PC-3 (cell line): ENCODE measurements at regions of chr10 and their contacts with region 1.

Region 1: GRCh38 chr10:73940634-73941221 is 29.8 kb downstream of the PLAU start:
- DNase-seq: peak; percentile 100
- ATAC-seq: peak; percentile 85
- H3K4me3 ChIP-seq: peak overlapping the region; percentile 38
- H3K27ac ChIP-seq: peak overlapping the region; percentile 74
- H3K4me1 ChIP-seq: peaks cover 31% of the 10 kb centered on the region
- H3K27me3 ChIP-seq: no peaks in the 10 kb centered on the region
- CTCF ChIP-seq: peak; percentile 100

Region 2: DNA sequence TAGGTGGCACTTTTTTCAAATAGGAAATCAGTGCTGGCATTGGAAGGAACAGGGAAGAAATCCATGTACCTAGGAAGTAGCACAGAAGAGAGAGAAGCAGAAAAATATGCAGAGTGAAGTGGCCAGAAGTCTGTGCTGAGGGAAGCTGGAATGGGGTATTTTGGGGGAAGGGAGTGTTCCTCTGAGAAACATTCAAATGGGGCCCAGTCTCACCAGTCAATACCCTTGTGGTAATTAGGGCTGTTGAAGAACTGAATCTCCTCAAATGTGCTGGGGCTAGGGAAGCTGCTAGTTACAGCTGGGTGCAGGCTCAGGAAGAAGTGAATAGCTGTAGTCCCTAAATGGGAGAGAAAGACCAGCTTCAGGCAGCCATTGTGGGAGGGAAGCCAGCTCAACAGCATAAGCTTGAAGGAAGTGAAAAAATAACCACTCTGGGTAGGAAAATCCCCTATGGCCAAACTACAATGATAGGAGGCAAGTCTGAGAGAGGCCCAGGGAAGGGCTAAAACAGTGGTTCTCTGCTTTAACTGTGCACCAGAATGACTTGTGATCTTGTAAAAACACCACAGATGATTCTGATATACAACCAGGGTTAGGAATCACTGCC is 136.9 kb before region 1 on chr10:
- CTCF ChIA-PET with region 1: no interaction called
- POLR2A ChIA-PET with region 1: no interaction called
- intact Hi-C with region 1: no loop called
- DNase-seq: no peak
- ATAC-seq: no peak
- H3K4me3 ChIP-seq: no peak overlapping the region
- H3K27ac ChIP-seq: no peak overlapping the region
- H3K4me1 ChIP-seq: no peaks in the 10 kb centered on the region
- H3K27me3 ChIP-seq: no peaks in the 10 kb centered on the region
- CTCF ChIP-seq: no peak

Region 3: DNA sequence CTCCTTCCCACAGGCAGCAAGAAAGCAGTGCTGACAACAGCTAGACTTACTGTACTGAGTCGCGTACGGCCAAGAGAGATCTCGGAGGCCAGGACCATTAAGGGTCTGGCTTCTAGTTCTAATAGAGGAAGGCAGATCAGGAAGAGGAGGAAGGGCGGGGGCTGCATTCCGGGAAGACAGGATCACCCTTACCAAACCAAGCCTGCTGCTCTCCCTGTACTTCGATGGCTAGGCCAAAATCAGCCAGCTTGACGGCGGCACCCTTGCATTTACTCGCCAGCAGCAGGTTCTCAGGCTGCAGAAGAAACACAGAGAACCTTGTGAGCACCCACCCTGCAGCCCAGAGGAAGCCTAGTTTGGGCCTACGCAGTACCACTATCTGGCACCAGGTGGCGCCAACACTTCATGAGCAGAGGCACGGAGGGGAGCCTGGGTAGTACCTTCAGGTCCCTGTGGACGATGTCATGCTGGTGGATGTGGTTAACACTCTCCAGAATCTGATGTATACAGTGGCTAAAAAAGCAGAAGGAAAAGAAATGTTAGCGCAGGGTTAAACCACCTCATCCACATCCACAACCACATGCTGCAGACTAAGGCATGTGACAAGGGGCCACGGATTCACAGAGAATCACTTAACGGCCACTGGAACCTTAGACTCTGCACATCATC is 91.8 kb before region 1 on chr10:
- CTCF ChIA-PET with region 1: interaction called, 4 read pairs
- POLR2A ChIA-PET with region 1: no interaction called
- intact Hi-C with region 1: loop called (anchors 1 kb)
- DNase-seq: peak; percentile 100
- ATAC-seq: peak; percentile 96
- H3K4me3 ChIP-seq: no peak overlapping the region
- H3K27ac ChIP-seq: no peak overlapping the region
- H3K4me1 ChIP-seq: no peaks in the 10 kb centered on the region
- H3K27me3 ChIP-seq: no peaks in the 10 kb centered on the region
- CTCF ChIP-seq: peak; percentile 100

Region 4: DNA sequence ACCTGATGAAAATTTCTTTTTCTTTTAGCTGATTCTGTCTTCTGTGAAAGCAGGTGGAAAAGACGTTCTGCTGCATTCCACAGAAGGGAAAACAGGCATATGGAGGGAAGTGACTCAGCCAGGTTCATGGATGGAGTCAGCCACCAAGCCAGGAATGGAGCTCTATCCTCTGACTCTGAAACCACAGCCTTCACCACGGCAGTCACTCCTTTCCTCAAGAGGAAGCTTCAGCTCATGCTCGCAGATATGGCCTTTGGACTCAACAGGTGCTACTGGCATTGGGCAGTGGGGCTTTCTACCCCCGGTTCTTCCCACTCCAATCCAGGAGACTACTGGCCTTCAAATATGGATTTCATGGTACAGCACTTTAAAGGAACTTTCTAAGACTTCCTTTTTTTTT is 41.3 kb before region 1 on chr10:
- CTCF ChIA-PET with region 1: interaction called, 34 read pairs
- POLR2A ChIA-PET with region 1: interaction called, 10 read pairs
- intact Hi-C with region 1: no loop called
- DNase-seq: peak; percentile 100
- ATAC-seq: peak; percentile 93
- H3K4me3 ChIP-seq: peak overlapping the region; percentile 8; the same call in 1 of the 2 replicates
- H3K27ac ChIP-seq: peak overlapping the region; percentile 78
- H3K4me1 ChIP-seq: peaks cover 54% of the 10 kb centered on the region
- H3K27me3 ChIP-seq: no peaks in the 10 kb centered on the region
- CTCF ChIP-seq: no peak

Region 5: GRCh38 chr10:73956476-73957359 is 16.0 kb after region 1 on chr10:
- CTCF ChIA-PET with region 1: interaction called, 16 read pairs
- POLR2A ChIA-PET with region 1: interaction called, 3 read pairs
- intact Hi-C with region 1: loop called (anchors 1 kb)
- DNase-seq: peak; percentile 67
- ATAC-seq: peak; percentile 39
- H3K4me3 ChIP-seq: no peak overlapping the region
- H3K27ac ChIP-seq: no peak overlapping the region
- H3K4me1 ChIP-seq: peaks cover 11% of the 10 kb centered on the region
- H3K27me3 ChIP-seq: no peaks in the 10 kb centered on the region
- CTCF ChIP-seq: no peak

Region 6: DNA sequence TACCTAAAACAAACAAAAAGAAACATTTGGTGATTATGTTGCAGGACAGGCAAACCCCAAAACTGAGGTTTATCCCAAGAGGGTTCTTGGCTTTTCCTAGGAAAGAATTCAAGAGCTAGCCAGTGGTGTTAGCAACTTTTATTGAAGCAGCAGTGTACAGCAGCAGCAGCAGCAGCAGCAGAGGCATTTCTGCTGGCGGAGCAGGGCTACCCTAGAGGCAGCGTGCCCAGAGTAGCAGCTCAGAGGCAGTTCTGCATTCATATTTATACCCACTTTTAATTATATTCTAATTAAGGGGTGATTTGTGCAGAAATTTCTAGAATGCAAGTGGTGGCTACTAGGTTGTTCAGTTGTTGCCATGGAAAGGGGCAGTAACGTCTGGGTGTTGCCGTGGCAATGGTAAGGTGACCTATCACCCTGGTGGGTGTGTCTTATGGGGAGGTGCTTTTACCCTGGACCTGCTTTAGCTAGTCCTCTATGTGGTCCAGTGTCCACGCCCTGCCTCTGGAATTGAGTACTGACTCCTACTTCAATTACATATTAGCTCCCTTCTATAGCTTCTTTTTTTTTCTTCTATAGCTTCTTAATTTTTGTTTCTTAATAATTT is 111.1 kb after region 1 on chr10:
- CTCF ChIA-PET with region 1: interaction called, 15 read pairs
- POLR2A ChIA-PET with region 1: interaction called, 3 read pairs
- intact Hi-C with region 1: no loop called
- DNase-seq: no peak
- ATAC-seq: no peak
- H3K4me3 ChIP-seq: no peak overlapping the region
- H3K27ac ChIP-seq: no peak overlapping the region
- H3K4me1 ChIP-seq: peaks cover 53% of the 10 kb centered on the region
- H3K27me3 ChIP-seq: no peaks in the 10 kb centered on the region
- CTCF ChIP-seq: no peak

Region 7: DNA sequence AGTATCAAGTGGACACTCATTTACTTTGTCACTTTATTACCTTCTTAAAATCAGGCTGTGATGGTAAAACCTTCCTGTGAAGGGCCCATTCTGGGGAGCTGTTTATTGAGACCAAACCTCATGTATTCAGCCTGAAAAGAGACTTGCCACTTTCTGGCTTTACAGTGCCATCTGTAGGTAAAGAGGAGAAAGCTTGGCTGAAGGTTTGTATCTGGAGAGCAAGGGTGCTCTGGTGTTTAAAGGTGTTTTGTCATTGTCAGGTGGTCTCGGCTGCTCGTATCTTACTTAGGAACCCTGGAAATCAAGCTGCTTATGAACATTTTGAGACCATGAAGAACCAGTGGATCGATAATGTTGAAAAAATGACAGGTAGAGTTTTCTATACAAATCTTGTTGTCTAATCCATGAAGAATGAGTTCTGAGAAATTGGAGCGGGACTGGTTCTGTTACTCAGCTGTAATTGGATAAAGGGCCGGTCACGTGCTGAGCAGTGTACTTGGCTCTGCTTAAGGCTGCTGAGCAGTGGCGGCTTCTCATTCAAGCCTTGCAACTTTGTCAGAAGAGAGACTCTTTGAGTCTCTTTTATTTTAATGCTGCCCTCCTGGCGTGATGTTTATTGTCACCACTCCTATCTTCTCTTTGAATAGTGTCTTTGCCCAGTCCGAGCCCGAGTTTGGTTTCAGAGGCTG is 163.0 kb after region 1 on chr10:
- CTCF ChIA-PET with region 1: interaction called, 19 read pairs
- POLR2A ChIA-PET with region 1: no interaction called
- intact Hi-C with region 1: loop called (anchors 1 kb)
- DNase-seq: peak; percentile 90
- ATAC-seq: peak; percentile 87
- H3K4me3 ChIP-seq: no peak overlapping the region
- H3K27ac ChIP-seq: no peak overlapping the region
- H3K4me1 ChIP-seq: no peaks in the 10 kb centered on the region
- H3K27me3 ChIP-seq: no peaks in the 10 kb centered on the region
- CTCF ChIP-seq: peak; percentile 100